ENCODE measurements at regions of chr7 and their contacts with region 1.

Region 1: GRCh38 chr7:15123901-15124300 is 221.3 kb upstream of the DGKB start:
- DNase-seq: no peak
- H3K4me3 ChIP-seq: no peak overlapping the region
- H3K27ac ChIP-seq: no peak overlapping the region
- H3K4me1 ChIP-seq: peaks cover 17% of the 10 kb centered on the region
- H3K27me3 ChIP-seq: no peaks in the 10 kb centered on the region
- CTCF ChIP-seq: no peak
- POLR2A ChIP-seq: no peak

Region 2: GRCh38 chr7:15086131-15086611 is 37.7 kb before region 1 on chr7:
- CTCF ChIA-PET with region 1: no interaction called
- POLR2A ChIA-PET with region 1: no interaction called
- dilution Hi-C with region 1: no loop called
- intact Hi-C with region 1: loop called (anchors 5 kb)
- DNase-seq: no peak
- H3K4me3 ChIP-seq: no peak overlapping the region
- H3K27ac ChIP-seq: no peak overlapping the region
- H3K4me1 ChIP-seq: peaks cover 7% of the 10 kb centered on the region
- H3K27me3 ChIP-seq: no peaks in the 10 kb centered on the region
- CTCF ChIP-seq: no peak
- POLR2A ChIP-seq: no peak

Region 3: GRCh38 chr7:15620491-15621185 is 496.7 kb after region 1 on chr7:
- CTCF ChIA-PET with region 1: no interaction called
- POLR2A ChIA-PET with region 1: no interaction called
- dilution Hi-C with region 1: no loop called
- intact Hi-C with region 1: no loop called
- DNase-seq: peak; percentile 24
- H3K4me3 ChIP-seq: no peak overlapping the region
- H3K27ac ChIP-seq: no peak overlapping the region
- H3K4me1 ChIP-seq: peaks cover 12% of the 10 kb centered on the region
- H3K27me3 ChIP-seq: no peaks in the 10 kb centered on the region
- CTCF ChIP-seq: no peak
- POLR2A ChIP-seq: no peak